GM12878 (cell line): ENCODE measurements at regions of chr15 and their contacts with region 1.

Region 1: GRCh38 chr15:29269485-29270168 is at the start of gene NSMCE3:
- DNase-seq: peak; percentile 96
- ATAC-seq: peak; percentile 93
- H3K4me3 ChIP-seq: peak within 1 kb of the TSS; percentile 97
- H3K27ac ChIP-seq: peak within 1 kb of the TSS; percentile 95
- H3K4me1 ChIP-seq: peaks cover 19% of the 10 kb centered on the region
- H3K27me3 ChIP-seq: no peaks in the 10 kb centered on the region
- CTCF ChIP-seq: no peak
- EP300 ChIP-seq: peak; percentile 91 to 93
- POLR2A ChIP-seq: peak; percentile 97
- RAD21 ChIP-seq: peak; percentile 20; the same call in 1 of the 2 replicates
- polyA plus RNA-seq, gene NSMCE3: 3.7 to 7.0 TPM

Region 2: DNA sequence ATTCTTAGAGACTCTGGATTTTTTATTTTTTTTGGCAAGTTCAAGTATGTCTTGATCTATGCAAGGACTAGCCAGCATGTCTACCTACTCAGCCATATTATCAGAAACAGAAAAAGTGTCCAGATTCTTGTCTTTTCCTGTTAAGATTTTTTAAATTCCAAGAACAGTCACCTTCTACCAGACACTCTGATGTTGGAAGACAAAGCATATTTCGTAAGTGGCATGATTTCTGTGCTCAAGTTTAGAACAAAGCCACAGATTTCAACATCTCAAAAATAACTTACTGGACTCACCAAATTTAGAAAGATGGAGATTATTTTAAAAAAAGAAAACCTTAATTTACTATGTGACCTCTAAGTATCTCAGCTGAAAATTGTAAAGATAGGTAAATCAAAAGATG is 483.1 kb before region 1 on chr15:
- CTCF ChIA-PET with region 1: no interaction called
- POLR2A ChIA-PET with region 1: no interaction called
- RAD21 ChIA-PET with region 1: no interaction called
- SMC1A ChIA-PET with region 1: no interaction called
- in situ Hi-C with region 1: no loop called
- intact Hi-C with region 1: no loop called
- DNase-seq: no peak
- ATAC-seq: no peak
- H3K4me3 ChIP-seq: no peak overlapping the region
- H3K27ac ChIP-seq: no peak overlapping the region
- H3K4me1 ChIP-seq: no peaks in the 10 kb centered on the region
- H3K27me3 ChIP-seq: no peaks in the 10 kb centered on the region
- CTCF ChIP-seq: no peak
- EP300 ChIP-seq: no peak
- POLR2A ChIP-seq: no peak
- RAD21 ChIP-seq: no peak

Region 3: GRCh38 chr15:28994831-28995596 is 274.6 kb before region 1 on chr15:
- CTCF ChIA-PET with region 1: no interaction called
- POLR2A ChIA-PET with region 1: no interaction called
- RAD21 ChIA-PET with region 1: no interaction called
- SMC1A ChIA-PET with region 1: no interaction called
- in situ Hi-C with region 1: no loop called
- intact Hi-C with region 1: no loop called
- DNase-seq: no peak
- ATAC-seq: no peak
- H3K4me3 ChIP-seq: no peak overlapping the region
- H3K27ac ChIP-seq: no peak overlapping the region
- H3K4me1 ChIP-seq: no peaks in the 10 kb centered on the region
- H3K27me3 ChIP-seq: no peaks in the 10 kb centered on the region; a peak in 2 of 4 replicates
- CTCF ChIP-seq: no peak
- EP300 ChIP-seq: no peak
- POLR2A ChIP-seq: no peak
- RAD21 ChIP-seq: no peak

Region 4: GRCh38 chr15:29090617-29091466 is 178.8 kb before region 1 on chr15:
- CTCF ChIA-PET with region 1: no interaction called
- POLR2A ChIA-PET with region 1: no interaction called
- RAD21 ChIA-PET with region 1: no interaction called
- SMC1A ChIA-PET with region 1: no interaction called
- in situ Hi-C with region 1: no loop called
- intact Hi-C with region 1: no loop called
- DNase-seq: no peak
- ATAC-seq: peak; percentile 78
- H3K4me3 ChIP-seq: no peak overlapping the region
- H3K27ac ChIP-seq: no peak overlapping the region
- H3K4me1 ChIP-seq: no peaks in the 10 kb centered on the region
- H3K27me3 ChIP-seq: no peaks in the 10 kb centered on the region
- CTCF ChIP-seq: peak; percentile 46 to 78 (median 74)
- EP300 ChIP-seq: no peak
- POLR2A ChIP-seq: no peak
- RAD21 ChIP-seq: peak; percentile 38

Region 5: DNA sequence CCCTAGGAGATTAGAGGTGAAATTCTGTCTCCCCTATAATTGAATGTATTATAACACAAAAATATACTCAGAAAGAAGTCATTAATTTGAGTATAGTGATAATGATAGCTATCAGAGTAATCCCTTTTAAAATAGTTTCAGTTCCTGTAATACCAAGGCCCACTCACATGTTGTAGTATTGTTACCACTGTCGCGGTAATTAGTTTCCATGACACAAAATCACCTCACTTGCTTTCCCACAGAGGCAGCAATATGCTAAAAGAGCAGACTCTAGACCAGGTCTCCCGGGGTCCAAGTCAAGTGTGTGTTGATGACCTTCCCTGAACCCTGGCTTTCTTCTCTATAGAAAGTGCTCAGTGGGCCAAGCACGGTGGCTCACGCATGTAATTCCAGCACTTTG is 39.5 kb after region 1 on chr15:
- CTCF ChIA-PET with region 1: interaction called, 3 read pairs
- POLR2A ChIA-PET with region 1: interaction called, 3 read pairs
- RAD21 ChIA-PET with region 1: interaction called, 6 read pairs
- SMC1A ChIA-PET with region 1: interaction called, 6 read pairs
- in situ Hi-C with region 1: no loop called
- intact Hi-C with region 1: loop called (anchors 5 kb)
- DNase-seq: peak; percentile 57
- ATAC-seq: peak; percentile 69
- H3K4me3 ChIP-seq: no peak overlapping the region
- H3K27ac ChIP-seq: peak overlapping the region; percentile 83
- H3K4me1 ChIP-seq: peaks cover 38% of the 10 kb centered on the region
- H3K27me3 ChIP-seq: no peaks in the 10 kb centered on the region
- CTCF ChIP-seq: no peak
- EP300 ChIP-seq: peak; percentile 75 to 83; a peak in 3 of 4 replicates
- POLR2A ChIP-seq: no peak
- RAD21 ChIP-seq: no peak

Region 6: DNA sequence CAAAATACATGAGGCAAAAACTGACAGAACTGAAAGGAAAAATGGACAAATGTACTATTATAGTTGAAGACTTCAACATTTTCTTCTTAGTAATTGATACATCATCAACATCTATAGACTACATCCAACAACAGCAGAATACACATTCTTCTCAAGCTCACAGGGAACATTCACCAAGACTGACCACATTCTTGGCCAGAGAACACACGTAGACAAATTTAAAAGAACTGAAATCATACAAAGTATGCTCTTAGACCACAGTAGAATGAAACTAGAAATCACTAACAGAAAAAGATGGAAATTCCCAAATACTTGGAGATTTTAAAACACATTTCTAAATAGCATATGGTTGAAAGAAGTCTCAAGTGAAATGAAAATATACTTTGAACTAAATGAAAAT is 55.1 kb after region 1 on chr15:
- CTCF ChIA-PET with region 1: no interaction called
- POLR2A ChIA-PET with region 1: no interaction called
- RAD21 ChIA-PET with region 1: no interaction called
- SMC1A ChIA-PET with region 1: no interaction called
- in situ Hi-C with region 1: no loop called
- intact Hi-C with region 1: loop called (anchors 5 kb)
- DNase-seq: no peak
- ATAC-seq: peak; percentile 51
- H3K4me3 ChIP-seq: no peak overlapping the region
- H3K27ac ChIP-seq: no peak overlapping the region
- H3K4me1 ChIP-seq: no peaks in the 10 kb centered on the region
- H3K27me3 ChIP-seq: no peaks in the 10 kb centered on the region
- CTCF ChIP-seq: no peak
- EP300 ChIP-seq: no peak
- POLR2A ChIP-seq: no peak
- RAD21 ChIP-seq: no peak